ENCODE measurements at regions of chr5 and their contacts with region 1.

Region 1: DNA sequence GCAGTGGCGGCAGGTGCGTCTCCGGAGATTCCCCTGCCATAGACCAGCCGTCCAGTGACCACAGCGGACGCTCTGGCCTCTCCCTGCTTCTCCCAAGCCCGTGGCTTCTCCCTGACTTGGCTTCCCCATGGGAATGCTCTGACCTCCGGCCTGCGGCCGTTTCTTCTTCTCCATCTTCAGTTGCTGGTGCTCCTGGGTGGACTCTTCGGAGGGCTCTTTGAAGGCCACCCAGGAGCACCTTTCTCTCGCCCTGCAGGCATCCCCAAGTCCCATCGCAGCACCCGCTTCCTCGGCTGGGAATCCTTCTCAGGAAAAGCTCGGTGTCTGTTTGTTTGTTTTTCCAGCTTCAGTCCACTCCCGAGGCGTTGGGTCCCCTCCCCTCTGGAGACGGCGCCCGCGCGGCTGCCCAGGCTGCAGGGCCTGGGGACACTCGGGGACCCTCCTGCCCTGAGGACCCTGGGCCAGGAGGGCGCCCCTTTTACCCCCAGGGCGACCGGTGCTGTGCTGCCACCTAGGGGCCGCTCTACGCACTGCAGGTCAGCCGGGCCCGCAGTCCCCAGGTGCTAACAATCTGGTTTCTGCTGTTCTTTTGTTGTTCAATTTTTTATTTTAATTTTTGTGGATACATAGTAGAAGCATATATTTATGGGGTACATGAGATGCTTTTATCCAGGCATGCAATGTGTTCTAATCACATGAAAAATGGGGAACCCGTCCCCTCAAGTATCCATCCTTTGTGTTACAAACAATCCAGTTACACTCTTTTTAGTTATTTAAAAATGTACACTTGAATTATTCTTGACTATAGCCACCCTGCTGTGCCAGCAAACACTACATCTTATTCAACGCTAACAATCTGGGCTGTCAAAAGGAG is 197.9 kb upstream of the ADAMTS16 start:
- DNase-seq: no peak
- H3K4me3 ChIP-seq: no peak overlapping the region
- H3K27ac ChIP-seq: no peak overlapping the region
- H3K4me1 ChIP-seq: no peaks in the 10 kb centered on the region
- H3K27me3 ChIP-seq: no peaks in the 10 kb centered on the region
- CTCF ChIP-seq: peak; percentile 55

Region 2: GRCh38 chr5:4855880-4856279 is 86.3 kb before region 1 on chr5:
- intact Hi-C with region 1: no loop called
- DNase-seq: no peak
- H3K4me3 ChIP-seq: no peak overlapping the region
- H3K27ac ChIP-seq: no peak overlapping the region
- H3K4me1 ChIP-seq: no peaks in the 10 kb centered on the region
- H3K27me3 ChIP-seq: no peaks in the 10 kb centered on the region
- CTCF ChIP-seq: no peak

Region 3: GRCh38 chr5:4879693-4880303 is 62.4 kb before region 1 on chr5:
- intact Hi-C with region 1: loop called (anchors 2 kb)
- DNase-seq: peak; percentile 66
- H3K4me3 ChIP-seq: no peak overlapping the region
- H3K27ac ChIP-seq: no peak overlapping the region
- H3K4me1 ChIP-seq: no peaks in the 10 kb centered on the region
- H3K27me3 ChIP-seq: no peaks in the 10 kb centered on the region
- CTCF ChIP-seq: peak; percentile 87

Measured in colonic mucosa (tissue), 4 donors.